Calu3 (cell line): ENCODE measurements at regions of chr1 and their contacts with region 1.

Region 1: DNA sequence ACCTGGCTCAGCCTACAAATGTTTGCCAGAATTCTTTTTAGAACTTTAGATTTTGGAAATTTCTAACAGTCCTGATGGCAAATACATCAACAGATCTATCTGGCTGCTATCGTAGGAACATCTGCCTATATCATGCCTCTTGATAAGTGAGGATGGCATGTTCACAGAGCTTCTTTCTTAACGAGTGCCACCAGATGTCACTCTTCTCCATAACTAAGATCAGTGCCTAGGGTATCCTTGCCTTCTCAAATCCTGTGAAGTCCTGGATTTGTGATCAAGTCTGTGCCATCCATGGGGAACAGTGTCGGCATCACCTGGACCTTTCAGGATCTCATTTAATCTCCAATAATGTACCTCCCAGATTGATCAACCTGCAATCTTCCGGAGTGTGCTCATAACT is 36.5 kb upstream of the CD5L start:
- DNase-seq: peak; percentile 44
- H3K4me3 Mint-ChIP-seq: no peak overlapping the region
- H3K27ac Mint-ChIP-seq: no peak overlapping the region
- H3K4me1 Mint-ChIP-seq: peaks cover 27% of the 10 kb centered on the region
- H3K27me3 Mint-ChIP-seq: no peaks in the 10 kb centered on the region
- CTCF ChIP-seq: peak; percentile 53

Region 2: GRCh38 chr1:157910270-157910669 is 32.2 kb after region 1 on chr1:
- CTCF ChIA-PET with region 1: no interaction called
- intact Hi-C with region 1: no loop called
- DNase-seq: no peak
- H3K4me3 Mint-ChIP-seq: no peak overlapping the region
- H3K27ac Mint-ChIP-seq: no peak overlapping the region
- H3K4me1 Mint-ChIP-seq: no peaks in the 10 kb centered on the region
- H3K27me3 Mint-ChIP-seq: peaks cover 44% of the 10 kb centered on the region
- CTCF ChIP-seq: no peak

Region 3: DNA sequence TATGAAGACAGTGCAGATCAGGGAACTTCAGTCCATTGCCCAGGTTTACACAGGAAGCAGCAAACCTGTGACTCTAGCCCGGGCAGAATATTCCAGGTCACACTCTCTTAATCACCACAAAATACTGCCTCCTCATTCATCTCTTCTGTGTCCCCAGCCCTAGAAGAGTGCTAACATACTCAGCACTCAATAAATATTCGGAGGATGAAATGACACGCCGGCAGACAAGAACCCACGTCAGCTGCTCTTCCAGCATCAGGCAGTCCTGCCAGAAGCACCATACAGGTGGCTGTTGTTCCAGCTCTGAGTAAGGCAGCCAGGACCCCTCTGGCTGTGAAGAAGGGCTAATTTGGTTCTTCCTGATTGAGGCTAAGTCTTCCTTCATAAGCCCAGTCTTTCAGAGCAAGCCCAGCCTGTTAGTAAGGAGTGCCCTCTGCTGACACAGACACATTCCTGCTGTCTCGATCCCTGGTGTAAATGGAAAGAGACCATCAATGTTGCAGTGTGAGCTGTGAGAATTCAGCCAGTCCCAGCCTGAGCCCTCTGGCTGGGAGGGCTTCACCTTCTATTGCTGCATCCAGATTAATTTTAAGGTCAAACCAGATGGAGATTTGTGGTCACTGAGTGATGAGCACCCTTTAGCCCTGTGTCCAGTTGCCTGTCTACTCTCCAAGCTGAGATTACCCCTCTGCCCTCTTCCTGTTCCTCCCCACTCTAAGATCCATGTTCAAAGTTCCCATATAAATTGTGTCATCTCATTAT is 70.4 kb after region 1 on chr1:
- CTCF ChIA-PET with region 1: interaction called, 55 read pairs
- intact Hi-C with region 1: loop called (anchors 1 kb)
- DNase-seq: peak; percentile 61
- H3K4me3 Mint-ChIP-seq: no peak overlapping the region
- H3K27ac Mint-ChIP-seq: no peak overlapping the region
- H3K4me1 Mint-ChIP-seq: peaks cover 26% of the 10 kb centered on the region
- H3K27me3 Mint-ChIP-seq: peaks cover 28% of the 10 kb centered on the region
- CTCF ChIP-seq: peak; percentile 72

Region 4: DNA sequence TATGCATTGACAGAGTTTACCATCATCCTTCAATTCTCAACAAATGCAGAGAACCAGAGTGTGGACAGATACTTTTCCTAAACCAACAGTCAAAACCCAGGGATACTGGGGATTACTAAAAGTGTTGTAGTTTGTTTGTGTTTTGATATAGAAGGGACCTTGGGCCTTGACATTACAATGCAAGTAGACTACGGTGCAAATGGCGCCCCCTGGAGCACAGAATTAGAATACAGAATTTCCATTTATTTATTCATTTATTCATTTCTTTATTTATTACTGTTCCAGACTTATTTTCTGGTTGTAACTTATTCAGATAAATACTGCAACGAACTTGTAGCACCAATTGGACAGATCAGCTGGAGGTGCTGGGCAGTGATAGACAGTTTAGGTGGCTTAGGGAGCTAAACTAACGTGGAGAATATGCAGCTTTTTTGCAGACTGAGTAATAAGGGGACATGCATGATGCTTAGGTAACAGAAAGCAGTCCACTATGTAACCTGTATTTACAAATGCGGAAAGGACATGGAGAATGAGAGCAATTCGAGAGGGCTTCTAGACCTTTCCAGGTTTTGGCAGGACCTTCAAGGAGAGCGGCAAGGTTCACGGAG is 158.0 kb after region 1 on chr1:
- CTCF ChIA-PET with region 1: no interaction called
- intact Hi-C with region 1: loop called (anchors 5 kb)
- DNase-seq: peak; percentile 60
- H3K4me3 Mint-ChIP-seq: no peak overlapping the region
- H3K27ac Mint-ChIP-seq: no peak overlapping the region
- H3K4me1 Mint-ChIP-seq: peaks cover 13% of the 10 kb centered on the region
- H3K27me3 Mint-ChIP-seq: no peaks in the 10 kb centered on the region
- CTCF ChIP-seq: peak; percentile 77